Breast epithelium (tissue), 4 donors: ENCODE measurements at regions of chr19 and their contacts with region 1.

Region 1: GRCh38 chr19:47704024-47704423 is 9.2 kb upstream of the EHD2 start:
- DNase-seq: no peak
- H3K4me3 ChIP-seq: no peak overlapping the region
- H3K27ac ChIP-seq: no peak overlapping the region
- H3K4me1 ChIP-seq: no peaks in the 10 kb centered on the region
- H3K27me3 ChIP-seq: no peaks in the 10 kb centered on the region
- CTCF ChIP-seq: no peak
- POLR2A ChIP-seq: no peak

Region 2: DNA sequence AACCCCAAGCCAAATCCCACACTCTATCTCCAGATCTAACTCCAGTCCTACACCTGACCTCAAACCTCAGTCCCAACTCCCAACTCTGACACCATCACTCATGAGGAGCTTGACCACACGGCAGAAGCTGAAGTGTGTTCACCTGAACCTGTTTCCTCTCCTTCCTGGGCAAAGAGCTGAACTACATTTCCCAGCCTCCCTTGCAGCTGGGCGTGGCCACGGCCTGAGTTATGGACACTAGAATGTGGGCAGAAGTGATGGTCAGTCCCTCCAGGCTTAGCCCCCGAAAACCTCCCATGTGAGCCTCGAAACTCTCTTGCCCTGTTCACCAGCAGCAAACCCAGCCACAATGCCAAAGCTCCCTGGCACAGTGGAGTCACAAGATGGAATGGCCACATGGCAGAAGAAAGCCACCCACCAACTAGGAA is 265.2 kb before region 1 on chr19:
- intact Hi-C with region 1: loop called (anchors 2 kb)
- DNase-seq: no peak
- H3K4me3 ChIP-seq: no peak overlapping the region
- H3K27ac ChIP-seq: no peak overlapping the region
- H3K4me1 ChIP-seq: no peaks in the 10 kb centered on the region
- H3K27me3 ChIP-seq: peaks cover 0 to 26% of the 10 kb centered on the region in 2 donors
- CTCF ChIP-seq: no peak
- POLR2A ChIP-seq: no peak

Region 3: DNA sequence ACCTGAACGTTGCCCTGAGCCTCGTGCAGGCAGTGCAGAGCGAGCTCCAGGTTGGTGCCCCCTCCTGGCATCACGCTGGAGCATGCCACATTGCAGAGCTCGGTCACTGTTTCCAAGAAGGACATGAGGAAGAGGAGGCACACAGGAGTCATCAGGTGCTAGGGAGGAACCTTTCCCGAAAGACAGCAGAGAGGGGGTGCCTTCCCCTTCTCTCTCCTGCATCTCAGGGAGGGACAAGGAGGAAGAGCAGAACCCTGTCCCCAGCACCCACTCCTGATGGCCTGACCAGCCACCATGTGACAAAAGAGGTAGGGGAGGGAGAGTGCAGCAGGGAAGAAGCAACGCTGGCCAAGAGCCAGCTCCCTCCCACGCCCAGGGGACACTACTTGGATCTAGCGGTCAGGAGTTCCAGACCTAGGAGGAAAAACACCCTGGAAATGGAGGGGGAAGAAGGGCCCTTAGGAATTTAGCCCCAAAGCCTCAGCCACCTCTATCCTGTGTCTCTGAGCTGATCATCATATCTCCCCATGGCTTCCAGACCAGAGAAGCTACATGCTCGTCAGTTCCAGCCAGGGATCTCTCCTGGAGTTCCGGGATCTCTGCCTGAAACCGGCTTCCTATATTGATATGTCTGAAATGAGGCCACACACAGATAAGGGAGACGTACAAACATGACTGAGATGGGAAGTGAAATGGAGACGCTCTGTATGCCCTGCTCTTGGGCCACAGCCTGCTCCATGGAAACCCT is 172.2 kb before region 1 on chr19:
- intact Hi-C with region 1: no loop called
- DNase-seq: no peak
- H3K4me3 ChIP-seq: no peak overlapping the region
- H3K27ac ChIP-seq: no peak overlapping the region
- H3K4me1 ChIP-seq: no peaks in the 10 kb centered on the region
- H3K27me3 ChIP-seq: no peaks in the 10 kb centered on the region
- CTCF ChIP-seq: no peak
- POLR2A ChIP-seq: no peak

Region 4: DNA sequence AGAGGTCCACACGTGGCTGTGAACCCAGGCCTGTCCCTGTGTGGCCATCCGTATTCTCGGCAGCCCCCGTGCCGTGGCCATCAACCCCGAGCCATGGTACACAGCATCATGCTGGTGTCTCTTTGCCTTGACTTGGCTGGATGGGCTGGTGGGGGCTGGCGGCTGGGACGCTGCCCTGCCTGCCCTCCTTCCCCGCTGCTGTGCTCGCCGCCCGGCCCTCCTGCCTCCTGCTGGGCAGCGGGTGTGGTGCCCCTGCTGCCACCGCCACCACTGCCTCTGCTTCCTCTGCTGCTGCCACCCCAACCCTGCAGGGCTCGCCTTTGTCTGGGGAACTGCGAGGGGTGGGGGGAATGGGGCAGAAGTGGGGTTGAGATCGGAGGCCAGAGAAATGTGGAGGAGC is 10.5 kb before region 1 on chr19:
- intact Hi-C with region 1: no loop called
- DNase-seq: no peak
- H3K4me3 ChIP-seq: no peak overlapping the region
- H3K27ac ChIP-seq: no peak overlapping the region
- H3K4me1 ChIP-seq: no peaks in the 10 kb centered on the region
- H3K27me3 ChIP-seq: no peaks in the 10 kb centered on the region
- CTCF ChIP-seq: no peak
- POLR2A ChIP-seq: no peak

Region 5: GRCh38 chr19:47768604-47769003 is 64.6 kb after region 1 on chr19:
- intact Hi-C with region 1: no loop called
- DNase-seq: no peak
- H3K4me3 ChIP-seq: no peak overlapping the region
- H3K27ac ChIP-seq: no peak overlapping the region
- H3K4me1 ChIP-seq: no peaks in the 10 kb centered on the region
- H3K27me3 ChIP-seq: no peaks in the 10 kb centered on the region
- CTCF ChIP-seq: no peak
- POLR2A ChIP-seq: no peak

Region 6: DNA sequence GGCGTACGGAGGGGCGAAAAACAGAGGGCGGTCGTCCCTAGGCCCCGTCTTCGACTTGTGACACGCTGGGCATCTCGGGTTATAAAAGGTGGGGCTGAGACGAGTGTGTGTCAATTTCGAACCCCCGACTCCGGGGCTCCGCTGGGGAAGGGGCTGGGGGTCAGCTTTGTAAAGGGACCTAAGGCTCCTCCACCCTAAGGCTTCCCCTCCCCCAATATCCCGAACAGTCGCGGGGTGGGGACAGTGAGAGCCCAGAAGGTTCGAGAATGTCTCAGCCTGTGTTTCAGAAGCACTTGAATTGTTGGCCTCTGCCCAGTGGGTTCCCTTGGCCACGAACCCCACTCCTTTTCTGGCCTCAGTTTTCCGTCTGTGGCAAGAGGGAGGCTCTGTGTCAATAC is 74.9 kb after region 1 on chr19:
- intact Hi-C with region 1: no loop called
- DNase-seq: no peak
- H3K4me3 ChIP-seq: peak overlapping the region; percentile 77 to 96 (median 83)
- H3K27ac ChIP-seq: peak overlapping the region; percentile 98 to 99
- H3K4me1 ChIP-seq: peaks cover 0 to 5% of the 10 kb centered on the region in 2 donors
- H3K27me3 ChIP-seq: no peaks in the 10 kb centered on the region
- CTCF ChIP-seq: no peak
- POLR2A ChIP-seq: no peak